Activated naive CD4-positive, alpha-beta T cell treated with anti-CD3 and anti-CD28 coated beads for 36 hours (primary cell): ENCODE measurements at regions of chr19 and their contacts with region 1.

Region 1: DNA sequence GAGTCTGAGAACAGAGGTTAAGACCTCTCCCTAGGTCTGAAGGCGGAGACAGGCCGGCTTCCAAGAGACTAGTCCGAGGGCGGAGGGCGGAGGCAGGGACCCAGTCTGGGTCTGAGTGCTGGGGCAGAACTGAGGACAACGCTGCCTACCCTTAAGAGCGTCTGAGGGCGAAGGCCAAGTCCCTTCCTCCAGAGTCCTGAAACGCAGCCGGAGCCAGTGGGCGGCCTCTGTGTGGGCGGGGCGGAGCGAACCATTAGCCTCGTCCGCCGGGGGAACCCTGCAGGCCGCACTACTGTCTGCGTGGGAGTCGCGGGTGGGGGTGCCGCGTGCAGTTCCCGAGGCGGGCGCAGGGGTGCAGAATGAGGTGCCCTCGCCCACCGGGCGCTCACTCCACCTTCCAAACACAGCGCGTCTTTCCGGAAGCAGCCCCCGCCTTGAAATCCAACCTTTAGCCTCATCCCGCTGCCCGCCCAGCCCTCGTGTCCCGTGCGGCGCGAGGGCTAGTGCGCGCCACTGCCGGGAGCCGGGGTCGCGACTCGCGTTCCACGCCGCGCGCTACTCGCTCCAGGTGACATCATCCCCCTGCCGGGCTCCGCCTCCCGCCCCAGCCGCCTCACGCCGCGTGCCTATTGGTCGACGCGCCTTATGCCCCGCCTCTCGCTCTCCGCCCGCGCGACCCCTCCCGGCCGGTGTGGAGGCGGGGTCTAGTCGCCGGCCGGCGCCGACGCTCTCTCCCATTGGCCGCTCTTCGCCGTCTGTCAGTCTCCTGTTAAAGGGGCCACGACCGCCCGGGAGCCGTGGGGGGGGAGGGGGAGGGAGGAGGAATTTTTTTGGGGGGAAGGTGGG is at the start of gene C19orf73:
- DNase-seq: peak; percentile 95
- H3K4me3 Mint-ChIP-seq: peak within 1 kb of the TSS; percentile 83
- H3K27ac Mint-ChIP-seq: peak within 1 kb of the TSS; percentile 86
- H3K4me1 Mint-ChIP-seq: peaks cover 32% of the 10 kb centered on the region
- H3K27me3 Mint-ChIP-seq: peaks cover 7% of the 10 kb centered on the region
- total RNA-seq, gene C19orf73: 1.5 to 1.9 TPM

Region 2: DNA sequence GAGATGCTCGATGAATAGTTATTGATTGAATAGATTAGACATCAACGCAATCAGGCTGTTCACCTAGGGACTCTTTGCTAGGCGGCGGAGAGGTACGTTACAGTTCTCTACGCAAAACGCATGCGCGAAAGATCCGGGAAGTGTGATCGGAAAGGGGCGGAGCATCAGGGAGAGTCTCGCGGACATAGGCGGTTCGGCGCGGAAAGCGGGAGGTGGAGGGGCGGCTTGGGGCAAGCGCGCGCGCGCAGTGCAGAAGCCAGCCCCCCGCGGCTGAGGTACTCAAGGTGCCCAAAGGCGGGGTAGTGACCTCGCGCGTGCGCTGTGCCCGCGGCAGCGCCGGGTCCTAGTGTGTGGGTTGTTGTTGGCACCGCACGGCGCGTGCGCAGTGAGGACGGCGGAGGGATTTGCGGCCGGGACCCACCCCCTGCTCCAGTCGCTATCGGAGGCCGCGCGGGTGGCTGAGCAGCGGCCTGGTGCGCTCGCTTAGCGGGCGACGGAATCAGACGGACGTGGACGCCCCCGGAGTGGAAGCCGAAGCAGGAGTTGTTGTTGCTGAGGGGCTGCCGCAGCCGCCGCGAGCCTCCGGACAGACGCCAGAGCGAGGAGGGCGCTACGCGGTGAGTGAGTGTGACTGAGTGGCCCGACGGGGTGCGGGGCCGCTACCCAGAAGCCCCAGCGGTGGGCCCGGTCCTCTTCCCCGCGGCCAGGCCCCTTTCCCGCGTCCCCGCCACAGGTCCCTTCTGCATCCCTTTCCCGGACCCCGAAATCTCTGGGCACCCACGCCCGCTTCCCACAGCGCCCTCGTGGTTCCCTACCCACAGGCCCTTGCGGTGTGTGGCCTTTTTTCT is 33.5 kb before region 1 on chr19 and contains the start of gene SNRNP70:
- CTCF ChIA-PET with region 1: interaction called, 3 read pairs
- intact Hi-C with region 1: loop called (anchors 1 kb)
- DNase-seq: peak; percentile 99
- H3K4me3 Mint-ChIP-seq: peak within 1 kb of the TSS; percentile 96
- H3K27ac Mint-ChIP-seq: peak within 1 kb of the TSS; percentile 93
- H3K4me1 Mint-ChIP-seq: peaks cover 31% of the 10 kb centered on the region
- H3K27me3 Mint-ChIP-seq: no peaks in the 10 kb centered on the region
- total RNA-seq, gene SNRNP70: 163 to 166 TPM

Region 3: DNA sequence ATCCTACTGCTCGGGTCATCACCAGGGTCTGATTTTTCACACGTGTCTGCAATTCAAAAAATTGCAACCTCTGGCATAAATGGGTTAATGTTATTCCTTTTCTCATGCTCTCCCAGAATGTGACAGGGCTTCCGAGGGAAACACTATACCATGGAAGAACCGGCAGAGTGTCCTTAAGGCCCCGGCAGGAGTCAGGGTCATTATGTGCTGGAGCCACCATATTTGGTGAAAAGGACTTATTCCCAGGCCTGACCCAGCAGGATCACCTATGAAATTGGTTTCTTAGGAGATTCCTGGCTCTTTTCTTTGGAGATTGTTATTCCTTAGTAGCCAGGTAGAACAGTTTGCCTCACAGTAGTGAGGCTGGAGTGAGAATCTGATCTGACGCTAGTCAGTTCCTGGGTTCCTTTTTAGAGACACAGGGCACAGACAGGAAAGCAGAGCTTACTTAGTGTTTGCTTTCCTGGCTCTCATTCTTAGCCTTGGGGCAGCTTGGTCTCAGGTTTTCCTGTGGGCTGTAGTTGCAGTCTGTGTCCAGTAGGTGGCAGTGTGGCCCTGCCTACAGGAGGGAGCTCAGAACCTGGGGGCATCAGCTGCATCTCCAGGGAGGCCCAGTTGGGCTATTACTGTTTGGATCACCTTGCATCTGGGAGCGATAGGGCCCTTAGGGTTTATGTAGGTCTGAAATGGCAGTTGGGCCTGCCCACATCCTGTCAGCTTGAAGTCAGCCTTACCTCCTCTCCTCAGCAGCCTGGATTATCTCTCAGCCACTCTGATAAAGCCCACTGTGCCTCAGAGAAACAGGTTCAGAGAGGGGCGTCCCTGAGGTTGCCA is 21.1 kb before region 1 on chr19:
- CTCF ChIA-PET with region 1: interaction called, 27 read pairs
- intact Hi-C with region 1: no loop called
- DNase-seq: peak; percentile 78
- H3K4me3 Mint-ChIP-seq: no peak overlapping the region
- H3K27ac Mint-ChIP-seq: no peak overlapping the region
- H3K4me1 Mint-ChIP-seq: peaks cover 4% of the 10 kb centered on the region
- H3K27me3 Mint-ChIP-seq: no peaks in the 10 kb centered on the region

Region 4: GRCh38 chr19:49106648-49107135 is 12.1 kb before region 1 on chr19:
- CTCF ChIA-PET with region 1: interaction called, 16 read pairs
- intact Hi-C with region 1: no loop called
- DNase-seq: peak; percentile 73
- H3K4me3 Mint-ChIP-seq: no peak overlapping the region
- H3K27ac Mint-ChIP-seq: no peak overlapping the region
- H3K4me1 Mint-ChIP-seq: peaks cover 2% of the 10 kb centered on the region
- H3K27me3 Mint-ChIP-seq: no peaks in the 10 kb centered on the region

Region 5: GRCh38 chr19:49148784-49149651 is 30.2 kb after region 1 on chr19:
- CTCF ChIA-PET with region 1: interaction called, 9 read pairs
- intact Hi-C with region 1: loop called (anchors 2 kb)
- DNase-seq: peak; percentile 93
- H3K4me3 Mint-ChIP-seq: peak overlapping the region; percentile 51
- H3K27ac Mint-ChIP-seq: no peak overlapping the region
- H3K4me1 Mint-ChIP-seq: peaks cover 24% of the 10 kb centered on the region
- H3K27me3 Mint-ChIP-seq: peaks cover 74% of the 10 kb centered on the region

Region 6: DNA sequence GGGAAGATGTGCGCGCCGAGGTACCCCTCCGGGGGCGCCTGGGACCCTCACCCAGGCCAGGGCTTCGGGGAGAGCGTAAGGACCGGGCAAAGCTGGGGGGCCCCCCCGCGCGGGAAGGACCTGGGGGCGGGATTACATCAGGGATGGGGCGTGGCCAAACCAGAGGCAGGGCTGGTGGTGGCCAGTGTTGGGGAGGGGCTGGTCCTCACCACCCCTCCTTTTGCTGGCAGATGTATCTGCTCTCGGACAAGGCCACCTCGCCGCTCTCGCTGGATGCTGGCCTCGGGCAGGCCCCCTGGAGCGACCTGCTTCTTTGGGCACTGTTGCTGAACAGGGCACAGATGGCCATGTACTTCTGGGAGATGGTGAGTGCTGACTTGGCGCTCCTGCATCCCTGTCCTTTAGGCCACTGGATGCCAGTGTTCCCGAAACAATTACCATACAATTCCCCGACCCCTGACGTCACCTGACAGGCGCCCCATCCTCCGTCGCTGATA is 64.1 kb after region 1 on chr19:
- CTCF ChIA-PET with region 1: no interaction called
- intact Hi-C with region 1: no loop called
- DNase-seq: no peak
- H3K4me3 Mint-ChIP-seq: no peak overlapping the region
- H3K27ac Mint-ChIP-seq: no peak overlapping the region
- H3K4me1 Mint-ChIP-seq: no peaks in the 10 kb centered on the region
- H3K27me3 Mint-ChIP-seq: peaks cover 5% of the 10 kb centered on the region

Region 7: DNA sequence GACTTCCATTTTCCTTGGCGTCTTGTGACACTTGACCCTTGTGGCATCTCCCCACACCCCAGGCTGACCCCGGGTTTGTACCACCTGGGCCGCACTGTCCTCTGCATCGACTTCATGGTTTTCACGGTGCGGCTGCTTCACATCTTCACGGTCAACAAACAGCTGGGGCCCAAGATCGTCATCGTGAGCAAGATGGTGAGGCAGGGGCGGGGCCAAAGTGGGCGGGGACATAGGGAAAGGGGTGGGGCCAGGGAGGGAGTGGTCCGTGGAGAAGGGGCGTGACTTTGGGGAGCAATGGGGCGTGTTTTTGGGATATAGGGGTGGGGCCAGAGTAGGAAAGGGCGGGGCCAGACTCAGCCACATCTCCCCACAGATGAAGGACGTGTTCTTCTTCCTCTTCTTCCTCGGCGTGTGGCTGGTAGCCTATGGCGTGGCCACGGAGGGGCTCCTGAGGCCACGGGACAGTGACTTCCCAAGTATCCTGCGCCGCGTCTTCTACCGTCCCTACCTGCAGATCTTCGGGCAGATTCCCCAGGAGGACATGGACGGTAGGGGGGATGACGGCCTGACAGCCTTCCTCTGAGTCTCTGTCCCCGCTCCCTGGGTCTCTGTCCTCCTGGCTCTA is 81.6 kb after region 1 on chr19:
- CTCF ChIA-PET with region 1: interaction called, 10 read pairs
- intact Hi-C with region 1: no loop called
- DNase-seq: no peak
- H3K4me3 Mint-ChIP-seq: no peak overlapping the region
- H3K27ac Mint-ChIP-seq: no peak overlapping the region
- H3K4me1 Mint-ChIP-seq: peaks cover 2% of the 10 kb centered on the region
- H3K27me3 Mint-ChIP-seq: no peaks in the 10 kb centered on the region

Region 8: GRCh38 chr19:49409441-49410029 is 290.7 kb after region 1 on chr19:
- CTCF ChIA-PET with region 1: no interaction called
- intact Hi-C with region 1: no loop called
- DNase-seq: peak; percentile 40
- H3K4me3 Mint-ChIP-seq: peak overlapping the region; percentile 1
- H3K27ac Mint-ChIP-seq: peak overlapping the region; percentile 46
- H3K4me1 Mint-ChIP-seq: peaks cover 54% of the 10 kb centered on the region
- H3K27me3 Mint-ChIP-seq: no peaks in the 10 kb centered on the region

Region 9: DNA sequence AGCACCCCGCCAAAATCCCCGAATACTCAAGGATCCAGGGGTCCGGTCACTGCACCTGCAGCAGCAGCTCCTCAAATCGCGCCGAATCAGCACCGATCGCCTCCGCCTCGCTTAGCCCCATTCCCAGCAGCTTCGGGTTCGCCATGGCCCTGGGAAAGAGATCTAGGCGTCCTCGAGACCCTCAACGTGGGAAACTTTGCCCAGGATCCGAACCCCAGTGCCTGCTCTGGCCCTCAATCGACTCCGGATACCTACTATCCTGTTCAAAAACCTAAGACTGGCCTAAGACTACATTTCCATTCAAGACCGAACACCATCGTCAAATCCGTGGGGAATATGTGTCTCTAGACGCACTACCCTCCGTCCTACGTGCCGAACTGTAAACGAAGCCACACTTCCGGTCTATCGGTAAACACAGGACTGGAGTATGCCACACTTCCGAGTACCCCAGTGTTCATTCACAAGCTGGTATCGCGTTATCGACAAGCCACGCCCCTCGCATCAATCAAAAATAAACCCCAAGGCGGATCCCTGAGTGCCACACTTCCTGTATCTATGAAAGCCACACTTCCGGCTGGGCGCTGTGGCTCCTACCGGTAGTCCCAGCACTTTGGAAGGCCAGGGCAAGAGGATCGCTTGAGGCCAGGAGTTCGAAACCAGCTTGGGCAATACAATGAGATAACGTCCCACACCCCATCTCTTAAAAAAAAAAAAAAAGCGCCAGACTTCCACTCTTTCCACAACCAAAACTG is 332.8 kb after region 1 on chr19 and contains the start of gene PIH1D1:
- CTCF ChIA-PET with region 1: no interaction called
- intact Hi-C with region 1: loop called (anchors 10 kb)
- DNase-seq: peak; percentile 99
- H3K4me3 Mint-ChIP-seq: peak within 1 kb of the TSS; percentile 100
- H3K27ac Mint-ChIP-seq: peak within 1 kb of the TSS; percentile 100
- H3K4me1 Mint-ChIP-seq: peaks cover 40% of the 10 kb centered on the region
- H3K27me3 Mint-ChIP-seq: no peaks in the 10 kb centered on the region
- total RNA-seq, gene PIH1D1: 80.7 to 84.4 TPM